ENCODE measurements at regions of chr7 and their contacts with region 1.

Region 1: GRCh38 chr7:111486472-111487142 is 75.7 kb downstream of the IMMP2L start:
- DNase-seq: no peak

Region 2: DNA sequence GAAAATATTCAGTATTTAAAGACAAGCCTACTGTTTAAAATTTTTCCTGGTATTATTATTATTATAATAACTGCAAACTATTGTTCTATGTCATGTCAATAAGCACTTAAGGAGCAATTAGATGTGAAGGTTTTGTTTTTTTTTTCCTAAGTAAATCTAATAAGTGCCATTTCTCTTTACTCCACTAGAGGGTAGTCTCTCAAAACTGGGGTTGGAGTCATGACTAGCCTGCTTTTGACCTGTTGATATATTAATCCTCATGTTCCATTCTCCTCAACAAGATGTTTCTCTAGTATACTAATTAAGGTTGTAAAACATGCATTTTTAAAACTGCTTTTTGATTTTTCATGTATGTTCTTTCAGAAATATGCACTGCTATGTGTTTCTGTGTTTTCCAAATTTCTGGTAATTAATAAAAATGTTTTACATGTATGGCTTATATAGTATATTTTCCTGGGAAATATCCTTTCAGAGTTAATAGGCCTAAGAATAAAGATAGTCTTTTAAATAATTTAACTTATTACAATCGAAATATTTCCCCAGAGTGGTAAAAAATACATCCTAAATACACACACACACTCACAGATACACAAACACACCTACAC is 396.7 kb before region 1 on chr7:
- intact Hi-C with region 1: loop called (anchors 5 kb)
- DNase-seq: no peak

Region 3: GRCh38 chr7:111147708-111148533 is 338.7 kb before region 1 on chr7:
- intact Hi-C with region 1: loop called (anchors 2 kb)
- DNase-seq: no peak

Region 4: DNA sequence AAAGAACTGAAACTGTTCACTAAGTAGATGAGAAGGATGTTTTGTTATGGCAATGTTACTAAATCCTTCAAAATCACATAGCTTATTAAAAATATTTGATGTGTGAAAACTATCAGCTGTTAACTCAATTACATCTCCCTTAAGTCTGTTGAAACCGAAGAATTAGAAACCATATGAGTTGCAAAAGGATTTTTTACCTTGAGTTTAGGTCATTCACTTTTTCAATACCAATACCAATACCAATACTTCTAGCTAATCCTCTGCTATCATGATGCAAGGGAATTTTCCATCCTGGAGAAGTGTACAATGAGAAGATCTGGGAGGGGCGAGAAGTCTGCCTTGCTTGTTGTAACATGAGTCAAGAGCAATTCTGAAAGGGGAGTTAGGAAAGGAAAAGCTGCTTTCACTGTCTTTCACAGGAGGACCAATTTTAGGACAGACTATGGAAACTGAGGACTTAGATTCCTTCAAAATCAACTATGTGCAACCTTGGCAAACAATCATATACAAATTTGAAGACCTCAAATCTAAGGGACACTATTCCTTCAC is 124.0 kb before region 1 on chr7:
- intact Hi-C with region 1: no loop called
- DNase-seq: no peak

Measured in cardiac septum (tissue), 1 donor.